WTC11 (cell line): ENCODE measurements at regions of chr7 and their contacts with region 1.

Region 1: GRCh38 chr7:129343099-129343700 is 91.0 kb upstream of the STRIP2 start:
- DNase-seq: no peak
- ATAC-seq: no peak
- H3K4me3 Mint-ChIP-seq: no peak overlapping the region
- H3K27ac Mint-ChIP-seq: no peak overlapping the region
- H3K4me1 Mint-ChIP-seq: peaks cover 18% of the 10 kb centered on the region
- H3K27me3 Mint-ChIP-seq: no peaks in the 10 kb centered on the region
- CTCF ChIP-seq: peak; percentile 25; the same call in 1 of the 2 replicates

Region 2: GRCh38 chr7:129332284-129333035 is 10.7 kb before region 1 on chr7:
- CTCF ChIA-PET with region 1: interaction called, 10 read pairs
- POLR2A ChIA-PET with region 1: no interaction called
- DNase-seq: no peak
- ATAC-seq: no peak
- H3K4me3 Mint-ChIP-seq: no peak overlapping the region
- H3K27ac Mint-ChIP-seq: no peak overlapping the region
- H3K4me1 Mint-ChIP-seq: no peaks in the 10 kb centered on the region
- H3K27me3 Mint-ChIP-seq: no peaks in the 10 kb centered on the region
- CTCF ChIP-seq: no peak

Region 3: DNA sequence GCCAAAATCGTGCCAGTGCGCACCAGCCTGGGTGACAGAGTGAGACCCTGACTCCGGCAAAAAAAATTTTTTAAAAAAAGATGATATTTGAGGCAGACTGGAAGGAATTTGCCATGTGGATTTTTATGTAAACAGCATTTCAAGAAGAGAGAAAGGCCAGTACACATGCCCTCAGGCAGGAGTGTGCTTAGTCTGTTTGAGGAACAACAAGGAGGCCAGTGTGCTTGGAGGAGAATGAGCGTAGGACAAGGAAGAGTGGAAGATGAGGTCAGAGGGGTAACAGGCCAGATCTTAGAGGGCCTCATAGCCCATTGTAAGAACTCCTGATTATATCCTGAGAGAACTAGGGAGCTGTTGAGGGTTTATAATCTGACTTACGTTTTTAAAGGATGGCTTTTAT is 73.9 kb after region 1 on chr7:
- CTCF ChIA-PET with region 1: no interaction called
- POLR2A ChIA-PET with region 1: no interaction called
- DNase-seq: no peak
- ATAC-seq: no peak
- H3K4me3 Mint-ChIP-seq: no peak overlapping the region
- H3K27ac Mint-ChIP-seq: no peak overlapping the region
- H3K4me1 Mint-ChIP-seq: no peaks in the 10 kb centered on the region
- H3K27me3 Mint-ChIP-seq: no peaks in the 10 kb centered on the region
- CTCF ChIP-seq: no peak